ENCODE measurements at regions of chr18 and their contacts with region 1.

Region 1: DNA sequence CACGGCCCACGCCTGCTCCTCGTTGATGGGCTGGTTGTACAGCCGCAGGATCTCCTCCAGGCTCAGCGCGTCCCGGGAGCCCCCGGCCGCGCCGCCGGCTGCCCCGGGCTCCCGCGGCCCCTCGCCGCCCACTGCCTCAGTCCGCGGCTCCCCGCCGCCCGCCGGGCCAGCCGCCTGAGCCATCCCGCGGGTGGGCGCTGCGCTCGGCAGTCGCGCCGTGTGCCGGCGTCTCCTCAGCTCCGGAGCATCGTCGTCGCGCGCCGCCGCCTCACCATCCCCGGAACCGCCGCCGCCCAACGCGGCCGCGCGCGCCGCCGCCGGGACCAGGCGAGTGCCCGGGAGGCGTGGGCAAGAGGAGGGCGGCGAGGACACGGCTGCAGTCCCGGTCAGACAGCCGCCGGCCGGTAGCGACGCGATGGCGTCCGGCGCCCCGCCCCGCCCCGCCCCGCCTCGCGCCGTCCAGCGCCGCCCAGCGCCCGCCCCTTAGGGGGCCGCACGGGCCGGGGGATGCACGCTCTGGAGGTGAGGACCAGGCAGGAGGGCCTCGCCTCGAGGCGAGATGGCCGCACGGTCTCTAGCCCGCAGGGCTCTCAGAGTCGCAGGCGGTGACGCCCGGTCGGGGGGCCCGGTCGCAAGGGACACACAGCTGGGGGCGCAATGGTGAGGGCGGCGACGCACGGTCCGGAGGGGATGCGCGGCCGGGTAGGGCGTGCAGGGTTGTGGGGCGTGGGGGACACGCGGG is at the start of gene SPIRE1:
- DNase-seq: peak; percentile 44
- H3K4me3 Mint-ChIP-seq: peak within 1 kb of the TSS; percentile 75
- H3K27ac Mint-ChIP-seq: no peak within 1 kb of the TSS
- H3K4me1 Mint-ChIP-seq: peaks cover 18% of the 10 kb centered on the region
- H3K27me3 Mint-ChIP-seq: peaks cover 8% of the 10 kb centered on the region
- total RNA-seq, gene SPIRE1: 5.1 to 7.2 TPM

Region 2: GRCh38 chr18:12271376-12272235 is 386.2 kb before region 1 on chr18:
- CTCF ChIA-PET with region 1: interaction called, 5 read pairs
- POLR2A ChIA-PET with region 1: no interaction called
- intact Hi-C with region 1: loop called (anchors 5 kb)
- DNase-seq: peak; percentile 70
- H3K4me3 Mint-ChIP-seq: peak overlapping the region; percentile 59
- H3K27ac Mint-ChIP-seq: no peak overlapping the region
- H3K4me1 Mint-ChIP-seq: peaks cover 3% of the 10 kb centered on the region
- H3K27me3 Mint-ChIP-seq: peaks cover 5% of the 10 kb centered on the region

Region 3: GRCh38 chr18:12327510-12328178 is 330.2 kb before region 1 on chr18:
- CTCF ChIA-PET with region 1: interaction called, 5 read pairs
- POLR2A ChIA-PET with region 1: no interaction called
- intact Hi-C with region 1: loop called (anchors 2 kb)
- DNase-seq: peak; percentile 86
- H3K4me3 Mint-ChIP-seq: no peak overlapping the region
- H3K27ac Mint-ChIP-seq: no peak overlapping the region
- H3K4me1 Mint-ChIP-seq: peaks cover 5% of the 10 kb centered on the region
- H3K27me3 Mint-ChIP-seq: no peaks in the 10 kb centered on the region

Region 4: DNA sequence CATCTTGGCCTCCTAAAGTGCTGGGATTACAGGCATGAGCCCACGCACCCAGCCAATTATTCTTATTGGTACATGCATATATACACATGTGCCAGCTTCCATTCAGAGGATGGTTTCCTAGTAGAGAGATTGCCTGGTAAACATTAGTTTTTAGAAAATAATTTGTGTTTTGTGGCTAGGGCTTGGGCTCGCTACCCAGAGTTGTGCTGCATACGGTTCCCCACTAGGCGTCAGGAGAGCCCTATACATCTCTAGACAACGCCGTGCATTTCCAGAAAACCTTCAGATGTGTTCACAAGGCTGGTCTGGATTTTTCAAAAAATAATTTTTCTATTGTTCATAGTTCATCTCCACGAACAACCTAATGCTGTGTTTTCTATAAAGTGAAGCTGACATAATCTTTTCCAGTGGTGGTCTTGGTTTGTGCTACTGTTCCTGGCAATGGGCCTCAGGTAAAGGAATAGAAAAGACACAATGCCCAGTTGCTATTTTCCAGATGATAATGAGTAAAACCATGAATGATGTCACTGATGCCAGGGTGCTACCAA is 266.2 kb before region 1 on chr18:
- CTCF ChIA-PET with region 1: interaction called, 64 read pairs
- POLR2A ChIA-PET with region 1: no interaction called
- intact Hi-C with region 1: loop called (anchors 1 kb)
- DNase-seq: peak; percentile 68
- H3K4me3 Mint-ChIP-seq: no peak overlapping the region
- H3K27ac Mint-ChIP-seq: no peak overlapping the region
- H3K4me1 Mint-ChIP-seq: no peaks in the 10 kb centered on the region
- H3K27me3 Mint-ChIP-seq: no peaks in the 10 kb centered on the region

Region 5: GRCh38 chr18:12543697-12544096 is 114.2 kb before region 1 on chr18:
- CTCF ChIA-PET with region 1: no interaction called
- POLR2A ChIA-PET with region 1: no interaction called
- intact Hi-C with region 1: loop called (anchors 10 kb)
- DNase-seq: no peak
- H3K4me3 Mint-ChIP-seq: no peak overlapping the region
- H3K27ac Mint-ChIP-seq: no peak overlapping the region
- H3K4me1 Mint-ChIP-seq: no peaks in the 10 kb centered on the region
- H3K27me3 Mint-ChIP-seq: no peaks in the 10 kb centered on the region

Region 6: DNA sequence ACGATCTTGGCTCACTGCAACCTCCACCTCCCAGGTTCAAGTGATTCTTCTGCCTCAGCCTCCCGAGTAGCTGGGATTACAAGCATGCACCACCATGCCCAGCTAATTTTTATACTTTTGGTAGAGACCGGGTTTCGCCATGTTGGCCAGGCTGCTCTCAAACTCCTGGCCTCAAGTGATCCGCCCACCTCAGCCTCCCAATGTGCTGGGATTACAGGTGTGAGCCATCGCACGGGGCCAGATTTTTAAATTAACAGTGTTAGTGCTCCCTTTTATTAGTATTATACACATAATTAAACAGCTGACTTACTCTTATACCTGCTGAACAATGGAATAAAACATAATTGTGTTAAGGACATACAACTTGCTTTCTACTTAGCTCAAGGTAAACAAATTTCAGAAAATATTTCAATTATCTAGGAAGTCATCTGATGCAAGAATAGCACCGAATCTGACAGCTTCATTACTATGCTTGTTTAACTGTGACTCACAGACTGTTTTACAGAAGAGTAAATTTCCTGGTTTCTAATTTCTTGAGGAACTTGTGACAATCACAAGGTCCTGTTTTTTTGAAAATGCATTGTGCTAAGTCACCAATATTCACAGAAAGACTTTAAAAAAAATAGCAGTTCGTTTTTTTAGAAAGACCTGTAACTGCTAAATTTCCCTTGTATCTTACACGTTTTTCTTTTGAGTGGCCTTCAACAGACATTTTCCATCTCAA is 51.1 kb before region 1 on chr18:
- CTCF ChIA-PET with region 1: no interaction called
- POLR2A ChIA-PET with region 1: no interaction called
- intact Hi-C with region 1: loop called (anchors 10 kb)
- DNase-seq: no peak
- H3K4me3 Mint-ChIP-seq: no peak overlapping the region
- H3K27ac Mint-ChIP-seq: no peak overlapping the region
- H3K4me1 Mint-ChIP-seq: no peaks in the 10 kb centered on the region
- H3K27me3 Mint-ChIP-seq: no peaks in the 10 kb centered on the region

Region 7: GRCh38 chr18:12628706-12629702 is 28.9 kb before region 1 on chr18:
- CTCF ChIA-PET with region 1: no interaction called
- POLR2A ChIA-PET with region 1: interaction called, 3 read pairs
- intact Hi-C with region 1: loop called (anchors 1 kb)
- DNase-seq: no peak
- H3K4me3 Mint-ChIP-seq: no peak overlapping the region
- H3K27ac Mint-ChIP-seq: no peak overlapping the region
- H3K4me1 Mint-ChIP-seq: peaks cover 4% of the 10 kb centered on the region
- H3K27me3 Mint-ChIP-seq: no peaks in the 10 kb centered on the region

Measured in activated CD4-positive, alpha-beta memory T cell treated with anti-CD3 and anti-CD28 coated beads for 36 hours (primary cell).